ENCODE measurements at regions of chr2 and their contacts with region 1.

Region 1: DNA sequence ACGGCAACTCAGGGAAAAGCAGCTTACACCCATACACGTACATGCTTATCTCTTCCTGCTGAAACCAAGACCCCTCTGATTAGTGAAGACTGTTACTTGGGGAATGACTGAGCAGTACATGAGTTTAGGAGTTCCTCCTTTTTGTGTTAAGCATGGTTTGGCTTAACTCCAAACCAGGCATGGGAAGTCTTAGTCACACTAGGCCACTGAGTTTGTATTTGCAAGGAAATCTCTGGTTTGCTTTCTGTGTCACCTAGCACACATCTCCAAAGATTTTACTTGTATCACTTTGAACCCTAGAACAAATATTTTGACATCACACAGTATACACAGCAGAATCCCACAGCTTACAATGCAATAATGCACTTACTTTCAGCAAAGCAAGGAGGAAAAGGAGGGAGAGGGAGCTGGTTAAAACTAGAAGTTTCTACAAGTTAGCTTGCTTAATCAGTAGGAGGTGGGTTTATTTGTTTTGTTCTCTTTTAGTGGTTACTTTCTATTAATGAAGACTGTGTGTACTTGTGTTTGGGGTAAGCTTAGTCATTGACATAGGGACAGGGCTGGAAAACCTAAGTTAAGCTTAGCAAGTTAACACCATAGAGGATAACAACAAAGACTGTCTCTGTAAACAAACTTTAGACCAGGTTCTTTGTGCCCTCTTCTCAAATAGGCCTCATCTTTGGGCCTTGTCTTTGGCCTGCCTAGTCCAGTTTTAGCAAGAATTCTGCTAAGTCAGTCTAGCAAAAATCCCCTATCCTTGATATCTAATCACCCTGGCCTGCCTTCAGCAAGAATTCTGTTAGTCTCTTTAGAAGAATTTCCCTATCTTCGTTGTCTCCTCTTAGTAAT is 219.4 kb downstream of the MREG start:
- DNase-seq: no peak
- H3K4me3 ChIP-seq: no peak overlapping the region
- H3K27ac ChIP-seq: no peak overlapping the region
- H3K4me1 ChIP-seq: no peaks in the 10 kb centered on the region; a peak in 1 of 7 replicates
- H3K27me3 ChIP-seq: no peaks in the 10 kb centered on the region
- CTCF ChIP-seq: no peak
- EP300 ChIP-seq: no peak
- POLR2A ChIP-seq: no peak
- RAD21 ChIP-seq: no peak

Region 2: DNA sequence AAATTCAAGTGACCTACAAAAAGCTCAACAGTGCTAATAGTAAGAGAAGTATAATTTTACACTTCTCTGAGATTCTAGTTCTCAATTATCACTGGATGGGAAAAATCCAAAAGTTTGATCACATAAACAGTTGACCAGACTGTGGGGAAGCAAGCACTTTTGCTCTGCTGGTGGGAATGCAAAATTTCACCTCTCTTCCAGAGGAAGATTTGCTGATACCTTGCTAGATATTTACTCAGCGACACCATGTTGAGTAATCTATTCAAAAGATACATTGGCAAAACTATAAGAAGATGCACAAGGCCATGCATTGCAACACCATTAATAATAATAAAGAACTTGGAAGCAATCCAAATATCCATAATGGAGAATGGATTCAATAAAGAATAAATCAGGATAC is 15.0 kb after region 1 on chr2:
- CTCF ChIA-PET with region 1: interaction called, 10 read pairs
- POLR2A ChIA-PET with region 1: no interaction called
- DNase-seq: no peak
- H3K4me3 ChIP-seq: peak overlapping the region in 1 of 4 experiments; percentile 33; a peak in 1 of 8 replicates
- H3K27ac ChIP-seq: no peak overlapping the region
- H3K4me1 ChIP-seq: peaks cover 0 to 5% (median 0%) of the 10 kb centered on the region in 4 experiments; a peak in 1 of 7 replicates
- H3K27me3 ChIP-seq: no peaks in the 10 kb centered on the region
- CTCF ChIP-seq: peak in 1 of 3 experiments; percentile 41; a peak in 1 of 4 replicates
- EP300 ChIP-seq: no peak
- POLR2A ChIP-seq: no peak
- RAD21 ChIP-seq: no peak

Region 3: GRCh38 chr2:215828517-215829184 is 34.7 kb after region 1 on chr2:
- CTCF ChIA-PET with region 1: interaction called, 24 read pairs
- POLR2A ChIA-PET with region 1: no interaction called
- DNase-seq: peak; percentile 50 to 73
- H3K4me3 ChIP-seq: no peak overlapping the region
- H3K27ac ChIP-seq: no peak overlapping the region
- H3K4me1 ChIP-seq: no peaks in the 10 kb centered on the region
- H3K27me3 ChIP-seq: no peaks in the 10 kb centered on the region
- CTCF ChIP-seq: peak; percentile 56 to 89 (median 80)
- EP300 ChIP-seq: no peak
- POLR2A ChIP-seq: no peak
- RAD21 ChIP-seq: peak; percentile 77 to 79

Region 4: GRCh38 chr2:215920244-215921100 is 126.5 kb after region 1 on chr2:
- CTCF ChIA-PET with region 1: interaction called, 62 read pairs
- POLR2A ChIA-PET with region 1: no interaction called
- DNase-seq: peak in 1 of 2 experiments; percentile 64
- H3K4me3 ChIP-seq: no peak overlapping the region
- H3K27ac ChIP-seq: no peak overlapping the region
- H3K4me1 ChIP-seq: peaks cover 0 to 16% (median 6%) of the 10 kb centered on the region in 4 experiments; a peak in 3 of 7 replicates
- H3K27me3 ChIP-seq: no peaks in the 10 kb centered on the region
- CTCF ChIP-seq: peak; percentile 80 to 88 (median 81)
- EP300 ChIP-seq: no peak
- POLR2A ChIP-seq: no peak
- RAD21 ChIP-seq: peak; percentile 98

Region 5: GRCh38 chr2:215931256-215931903 is 137.4 kb after region 1 on chr2:
- CTCF ChIA-PET with region 1: interaction called, 28 read pairs
- POLR2A ChIA-PET with region 1: no interaction called
- DNase-seq: peak in 1 of 2 experiments; percentile 87
- H3K4me3 ChIP-seq: no peak overlapping the region
- H3K27ac ChIP-seq: no peak overlapping the region
- H3K4me1 ChIP-seq: peaks cover 2 to 6% (median 3%) of the 10 kb centered on the region in 4 experiments; a peak in 4 of 7 replicates
- H3K27me3 ChIP-seq: no peaks in the 10 kb centered on the region
- CTCF ChIP-seq: peak in 2 of 3 experiments; percentile 88 to 94; a peak in 3 of 4 replicates
- EP300 ChIP-seq: no peak
- POLR2A ChIP-seq: no peak
- RAD21 ChIP-seq: peak; percentile 96 to 99

Measured in H1 (cell line).